CD14-positive monocyte (primary cell): ENCODE measurements at regions of chr9 and their contacts with region 1.

Region 1: GRCh38 chr9:35954942-35955546 is 2.9 kb downstream of the OR2S2 start:
- DNase-seq: peak; percentile 37 to 60 (median 58)
- H3K4me3 ChIP-seq: no peak overlapping the region
- H3K4me3 Mint-ChIP-seq: no peak overlapping the region
- H3K27ac ChIP-seq: no peak overlapping the region
- H3K27ac Mint-ChIP-seq: no peak overlapping the region
- H3K4me1 ChIP-seq: peaks cover 0 to 3% of the 10 kb centered on the region in 2 donors
- H3K4me1 Mint-ChIP-seq: peaks cover 7% of the 10 kb centered on the region
- H3K27me3 ChIP-seq: peaks cover 0 to 3% of the 10 kb centered on the region in 2 donors
- H3K27me3 Mint-ChIP-seq: peaks cover 6 to 17% (median 9%) of the 10 kb centered on the region in 3 donors
- CTCF ChIP-seq: peak; percentile 84

Region 2: DNA sequence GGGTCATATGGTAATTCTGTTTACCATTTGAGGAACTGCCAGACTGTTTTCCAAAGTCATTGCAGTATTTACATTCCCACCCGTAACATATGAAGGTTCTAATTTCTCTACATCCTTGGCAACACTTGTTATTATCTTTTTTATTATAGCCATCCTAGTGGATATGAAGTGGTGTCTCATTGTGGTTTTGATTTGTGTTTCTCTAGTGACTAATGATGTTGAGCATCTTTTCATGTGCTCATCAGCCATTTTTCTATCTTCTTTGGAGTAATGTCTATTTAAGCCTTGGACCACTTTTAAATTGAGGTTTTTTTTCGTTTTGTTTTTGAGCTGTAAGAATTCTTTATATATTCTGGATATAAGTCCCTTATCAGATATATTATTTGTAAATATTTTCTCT is 597.9 kb before region 1 on chr9:
- intact Hi-C with region 1: no loop called
- DNase-seq: no peak
- H3K4me3 ChIP-seq: no peak overlapping the region
- H3K4me3 Mint-ChIP-seq: no peak overlapping the region
- H3K27ac ChIP-seq: no peak overlapping the region
- H3K27ac Mint-ChIP-seq: no peak overlapping the region
- H3K4me1 ChIP-seq: no peaks in the 10 kb centered on the region
- H3K4me1 Mint-ChIP-seq: no peaks in the 10 kb centered on the region
- H3K27me3 ChIP-seq: no peaks in the 10 kb centered on the region
- H3K27me3 Mint-ChIP-seq: no peaks in the 10 kb centered on the region
- CTCF ChIP-seq: no peak

Region 3: GRCh38 chr9:35923927-35924763 is 30.9 kb before region 1 on chr9:
- intact Hi-C with region 1: no loop called
- DNase-seq: no peak
- H3K4me3 ChIP-seq: no peak overlapping the region
- H3K4me3 Mint-ChIP-seq: no peak overlapping the region
- H3K27ac ChIP-seq: no peak overlapping the region
- H3K27ac Mint-ChIP-seq: peak overlapping the region in 1 of 7 donors; percentile 14
- H3K4me1 ChIP-seq: peaks cover 6 to 7% of the 10 kb centered on the region in 2 donors
- H3K4me1 Mint-ChIP-seq: peaks cover 15% of the 10 kb centered on the region
- H3K27me3 ChIP-seq: no peaks in the 10 kb centered on the region
- H3K27me3 Mint-ChIP-seq: no peaks in the 10 kb centered on the region
- CTCF ChIP-seq: no peak

Region 4: DNA sequence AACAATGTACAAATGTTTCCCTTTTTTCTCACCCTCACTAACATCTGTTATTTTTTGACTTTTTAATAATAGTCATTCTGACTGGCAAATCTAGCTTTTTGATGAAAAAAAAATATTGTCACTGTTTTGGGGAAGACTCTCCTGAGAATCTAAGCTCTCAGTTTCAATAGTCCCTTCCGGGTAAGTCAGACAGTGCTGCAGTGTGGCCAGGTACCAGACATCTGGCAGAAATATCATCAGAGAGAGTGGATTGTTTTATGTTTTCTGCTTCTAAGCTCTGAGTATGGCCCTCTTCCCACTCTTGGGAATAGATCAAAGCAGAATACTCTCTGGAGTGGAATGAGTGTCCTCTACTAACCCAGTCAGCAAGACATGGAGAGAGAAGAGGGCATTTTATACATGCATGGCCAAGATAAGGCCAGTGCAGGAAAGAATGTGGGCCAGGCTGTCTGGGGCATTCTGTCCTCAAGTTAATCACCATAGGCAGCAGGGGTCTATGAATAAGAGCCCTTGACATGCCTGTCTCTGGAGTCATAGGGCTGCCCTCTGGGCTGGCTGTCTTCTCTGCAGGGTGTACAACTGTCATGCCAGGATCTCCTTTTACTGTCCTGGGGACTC is 41.4 kb after region 1 on chr9:
- intact Hi-C with region 1: no loop called
- DNase-seq: no peak
- H3K4me3 ChIP-seq: no peak overlapping the region
- H3K4me3 Mint-ChIP-seq: no peak overlapping the region
- H3K27ac ChIP-seq: no peak overlapping the region
- H3K27ac Mint-ChIP-seq: no peak overlapping the region
- H3K4me1 ChIP-seq: no peaks in the 10 kb centered on the region
- H3K4me1 Mint-ChIP-seq: peaks cover under 1% of the 10 kb centered on the region
- H3K27me3 ChIP-seq: peaks cover 0 to 3% of the 10 kb centered on the region in 2 donors
- H3K27me3 Mint-ChIP-seq: peaks cover 3 to 11% (median 5%) of the 10 kb centered on the region in 3 donors
- CTCF ChIP-seq: no peak

Region 5: DNA sequence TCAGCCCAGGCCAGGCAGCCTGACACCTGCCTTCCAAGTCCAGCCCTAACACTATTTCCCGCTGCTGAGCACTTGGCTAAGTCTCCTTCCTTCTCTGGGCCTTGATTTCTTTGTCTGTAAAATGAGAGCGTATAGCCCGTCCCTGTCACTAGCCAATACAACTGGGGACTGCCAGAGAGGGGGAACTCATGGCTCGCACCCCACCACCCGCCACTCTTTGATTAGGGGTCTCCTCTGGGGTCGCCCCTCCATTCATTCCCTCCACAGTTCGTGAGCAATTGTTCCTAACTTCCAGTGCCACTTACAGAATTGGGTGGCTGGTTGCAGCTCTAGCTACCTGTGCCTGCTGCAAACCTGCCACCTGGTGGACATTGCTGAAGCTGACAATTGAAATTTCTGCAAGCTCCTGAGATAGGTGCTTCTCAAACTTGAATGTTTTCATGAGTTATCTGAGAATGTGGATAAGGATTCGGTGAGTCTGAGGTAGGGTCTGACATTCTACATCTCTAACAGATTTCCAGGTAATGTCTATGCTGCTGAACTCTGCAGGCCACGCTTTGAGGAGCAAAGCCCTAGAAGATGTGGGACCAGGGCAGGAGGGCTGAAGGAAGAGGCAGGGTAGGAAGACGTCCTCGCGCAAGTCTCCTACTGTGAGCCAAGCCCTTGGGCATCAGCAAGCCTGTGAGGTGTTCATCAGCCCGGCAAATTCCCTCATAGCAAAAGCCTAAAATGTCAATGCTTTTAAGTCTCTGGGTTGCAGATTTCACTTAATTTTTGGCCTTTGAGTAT is 68.4 kb after region 1 on chr9:
- intact Hi-C with region 1: loop called in 1 of 2 experiments (anchors 10 kb)
- DNase-seq: peak in 2 of 3 donors; percentile 44 to 46
- H3K4me3 ChIP-seq: no peak overlapping the region
- H3K4me3 Mint-ChIP-seq: no peak overlapping the region
- H3K27ac ChIP-seq: no peak overlapping the region
- H3K27ac Mint-ChIP-seq: no peak overlapping the region
- H3K4me1 ChIP-seq: no peaks in the 10 kb centered on the region
- H3K4me1 Mint-ChIP-seq: no peaks in the 10 kb centered on the region
- H3K27me3 ChIP-seq: no peaks in the 10 kb centered on the region
- H3K27me3 Mint-ChIP-seq: peaks cover 0 to 3% (median 2%) of the 10 kb centered on the region in 3 donors
- CTCF ChIP-seq: peak; percentile 82